ENCODE measurements at regions of chr15 and their contacts with region 1.

Region 1: GRCh38 chr15:51776952-51777574 is 25.7 kb downstream of the TMOD2 start:
- DNase-seq: peak; percentile 53
- H3K4me3 Mint-ChIP-seq: no peak overlapping the region
- H3K27ac Mint-ChIP-seq: no peak overlapping the region
- H3K4me1 Mint-ChIP-seq: peaks cover 7% of the 10 kb centered on the region
- H3K27me3 Mint-ChIP-seq: no peaks in the 10 kb centered on the region

Region 2: DNA sequence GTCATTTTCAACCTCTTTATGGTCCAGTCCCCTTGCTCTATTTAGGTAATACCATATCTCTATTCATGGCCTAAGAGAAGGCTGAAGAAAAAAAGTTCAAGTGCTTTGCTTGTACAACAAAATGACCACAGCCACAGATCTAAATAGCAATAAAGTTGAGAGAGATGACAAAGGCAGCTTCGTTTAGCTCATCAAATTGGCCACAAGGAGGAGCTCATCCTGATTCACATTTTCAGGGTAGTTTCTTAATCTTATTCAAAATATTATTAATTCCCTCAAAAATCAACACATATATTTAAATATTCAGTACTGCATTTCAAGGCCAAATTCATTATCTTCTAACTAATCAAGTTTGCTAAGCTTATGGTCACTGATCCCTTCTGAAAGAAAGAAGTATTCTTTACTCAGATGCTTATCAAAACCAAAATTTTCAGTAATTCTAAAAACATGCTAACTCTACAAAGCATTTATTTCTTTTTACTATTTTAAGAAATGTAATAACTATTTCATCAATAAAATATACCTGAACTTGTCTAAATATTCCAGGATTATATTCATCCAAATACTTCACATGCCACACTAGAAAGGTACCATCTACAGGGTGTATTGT is 240.0 kb before region 1 on chr15:
- intact Hi-C with region 1: loop called (anchors 5 kb)
- DNase-seq: no peak
- H3K4me3 Mint-ChIP-seq: no peak overlapping the region
- H3K27ac Mint-ChIP-seq: no peak overlapping the region
- H3K4me1 Mint-ChIP-seq: no peaks in the 10 kb centered on the region
- H3K27me3 Mint-ChIP-seq: peaks cover 2% of the 10 kb centered on the region